ENCODE measurements at regions of chr22 and their contacts with region 1.

Region 1: DNA sequence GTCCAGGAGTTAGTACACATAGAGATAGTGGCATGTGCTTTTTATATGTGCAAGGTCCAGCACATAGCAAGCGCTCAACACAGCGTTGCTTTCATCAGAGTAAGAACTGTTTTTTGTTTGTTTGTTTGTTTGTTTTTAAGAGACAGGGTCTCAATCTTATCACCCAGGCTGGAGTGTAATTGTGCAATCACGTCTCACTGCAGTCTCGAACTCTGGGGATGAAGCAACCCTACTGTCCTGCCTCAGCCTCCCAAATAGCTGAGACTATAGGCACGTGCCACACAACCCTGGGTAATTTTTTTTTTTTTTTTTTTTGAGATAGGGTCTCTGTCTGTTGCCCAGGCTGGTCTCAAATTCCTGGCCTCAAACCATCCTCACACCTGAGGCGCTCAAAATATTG is 10.8 kb downstream of the TCN2 start:
- DNase-seq: no peak
- ATAC-seq: no peak
- H3K4me3 ChIP-seq: no peak overlapping the region
- H3K27ac ChIP-seq: no peak overlapping the region
- H3K4me1 ChIP-seq: no peaks in the 10 kb centered on the region; a peak in 2 of 5 replicates
- H3K27me3 ChIP-seq: no peaks in the 10 kb centered on the region
- CTCF ChIP-seq: no peak
- EP300 ChIP-seq: no peak
- POLR2A ChIP-seq: no peak
- RAD21 ChIP-seq: no peak

Region 2: GRCh38 chr22:30596199-30596598 is 21.6 kb before region 1 on chr22:
- CTCF ChIA-PET with region 1: no interaction called
- POLR2A ChIA-PET with region 1: no interaction called
- in situ Hi-C with region 1: no loop called
- intact Hi-C with region 1: no loop called
- DNase-seq: no peak
- ATAC-seq: no peak
- H3K4me3 ChIP-seq: no peak overlapping the region
- H3K27ac ChIP-seq: no peak overlapping the region
- H3K4me1 ChIP-seq: no peaks in the 10 kb centered on the region
- H3K27me3 ChIP-seq: no peaks in the 10 kb centered on the region
- CTCF ChIP-seq: no peak
- EP300 ChIP-seq: no peak
- POLR2A ChIP-seq: no peak
- RAD21 ChIP-seq: no peak

Region 3: DNA sequence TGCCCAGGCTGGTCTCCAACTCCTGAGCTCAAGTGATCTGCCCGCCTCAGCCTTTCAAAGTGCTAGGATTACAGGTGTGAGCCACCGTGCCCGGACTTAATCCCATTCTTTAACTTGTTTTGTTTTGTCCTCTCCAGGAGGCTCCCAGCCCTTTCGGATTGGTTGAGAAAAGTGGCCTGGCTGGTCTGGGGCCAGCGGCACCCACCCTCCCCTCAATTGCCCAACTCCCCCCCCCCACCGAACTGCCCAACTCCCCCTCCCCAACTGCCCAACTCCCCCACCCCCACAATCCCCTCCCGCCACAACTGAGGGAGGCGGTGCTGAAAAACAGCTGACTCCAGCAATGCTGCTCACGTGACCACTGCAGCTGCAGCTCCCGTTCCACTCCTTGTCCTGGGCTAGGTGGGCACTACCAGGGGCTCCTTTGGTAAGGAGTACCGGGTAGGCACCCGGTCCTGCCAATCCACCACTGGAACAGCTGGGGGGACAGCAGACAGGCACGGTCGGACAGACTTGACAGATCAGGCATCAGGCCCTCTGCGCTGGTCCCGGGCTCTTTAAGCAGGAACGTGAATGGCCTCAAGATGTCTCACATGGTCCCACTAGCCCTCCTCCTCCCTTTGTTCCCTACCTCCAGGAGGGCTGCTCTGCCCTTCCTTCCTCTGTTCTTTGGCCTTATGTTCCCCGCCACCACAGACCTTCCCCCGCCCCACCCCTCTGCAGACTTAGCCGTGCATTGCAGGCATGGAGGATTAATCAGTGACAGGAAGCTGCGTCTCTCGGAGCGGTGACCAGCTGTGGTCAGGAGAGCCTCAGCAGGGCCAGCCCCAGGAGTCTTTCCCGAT is 11.1 kb before region 1 on chr22 and contains the start of gene TCN2:
- CTCF ChIA-PET with region 1: no interaction called
- POLR2A ChIA-PET with region 1: interaction called, 17 read pairs
- in situ Hi-C with region 1: no loop called
- intact Hi-C with region 1: no loop called
- DNase-seq: peak; percentile 49 to 73 (median 60)
- ATAC-seq: peak; percentile 80
- H3K4me3 ChIP-seq: peak within 1 kb of the TSS; percentile 41
- H3K27ac ChIP-seq: peak within 1 kb of the TSS; percentile 56
- H3K4me1 ChIP-seq: peaks cover 21 to 41% of the 10 kb centered on the region in 2 experiments
- H3K27me3 ChIP-seq: no peaks in the 10 kb centered on the region
- CTCF ChIP-seq: no peak
- EP300 ChIP-seq: no peak
- POLR2A ChIP-seq: no peak
- RAD21 ChIP-seq: no peak
- polyA plus RNA-seq, gene TCN2: 4.8 to 5.4 TPM

Region 4: DNA sequence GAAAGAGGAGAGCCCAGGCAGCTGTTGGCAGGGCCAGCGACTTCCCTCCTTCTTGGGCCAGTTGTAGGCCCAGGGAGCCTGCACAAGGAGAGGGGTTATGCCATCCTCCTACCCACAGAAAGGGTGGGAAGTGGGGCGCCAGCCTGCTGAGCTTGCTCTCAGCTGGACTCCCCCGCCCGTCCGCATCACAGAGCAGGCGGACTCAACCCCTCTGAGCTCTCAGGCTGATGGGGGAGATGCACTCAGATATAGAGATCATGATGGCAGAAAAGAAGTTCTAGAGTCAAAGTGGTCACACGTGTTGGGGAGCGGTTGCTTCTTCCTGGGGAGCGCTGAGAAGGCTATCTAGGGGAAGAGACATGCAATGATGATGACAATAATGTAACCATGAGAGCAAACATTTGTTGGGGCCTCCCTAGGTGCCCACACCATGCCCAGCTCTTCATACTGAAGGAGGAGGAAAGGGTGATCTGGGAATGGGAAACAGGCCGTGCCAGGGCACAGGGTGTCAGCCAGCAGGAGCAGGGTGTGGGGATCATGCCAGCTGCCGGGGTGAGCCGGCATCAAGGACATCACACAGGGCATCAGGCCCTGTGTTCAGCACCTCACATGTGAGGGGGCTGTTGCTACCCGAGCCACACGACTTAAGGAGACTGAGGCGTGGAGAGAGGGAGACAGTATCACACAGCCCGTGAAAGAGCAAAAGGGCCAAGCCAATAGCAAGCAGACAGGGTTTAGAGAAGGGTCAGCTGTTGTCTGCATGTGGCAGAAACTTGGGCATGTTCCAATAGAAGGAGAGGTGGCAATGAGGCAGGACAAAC is 25.4 kb after region 1 on chr22:
- CTCF ChIA-PET with region 1: no interaction called
- POLR2A ChIA-PET with region 1: no interaction called
- in situ Hi-C with region 1: no loop called
- intact Hi-C with region 1: no loop called
- DNase-seq: no peak
- ATAC-seq: no peak
- H3K4me3 ChIP-seq: no peak overlapping the region
- H3K27ac ChIP-seq: no peak overlapping the region
- H3K4me1 ChIP-seq: peaks cover 3 to 17% of the 10 kb centered on the region in 2 experiments; a peak in 4 of 5 replicates
- H3K27me3 ChIP-seq: no peaks in the 10 kb centered on the region
- CTCF ChIP-seq: no peak
- EP300 ChIP-seq: no peak
- POLR2A ChIP-seq: no peak
- RAD21 ChIP-seq: no peak

Measured in K562 (cell line).